Lower leg skin (tissue), 4 donors: ENCODE measurements at regions of chr5 and their contacts with region 1.

Region 1: GRCh38 chr5:69265931-69266330 is 31.2 kb downstream of the CDK7 start:
- DNase-seq: no peak
- H3K4me3 ChIP-seq: no peak overlapping the region
- CTCF ChIP-seq: no peak
- POLR2A ChIP-seq: no peak

Region 2: DNA sequence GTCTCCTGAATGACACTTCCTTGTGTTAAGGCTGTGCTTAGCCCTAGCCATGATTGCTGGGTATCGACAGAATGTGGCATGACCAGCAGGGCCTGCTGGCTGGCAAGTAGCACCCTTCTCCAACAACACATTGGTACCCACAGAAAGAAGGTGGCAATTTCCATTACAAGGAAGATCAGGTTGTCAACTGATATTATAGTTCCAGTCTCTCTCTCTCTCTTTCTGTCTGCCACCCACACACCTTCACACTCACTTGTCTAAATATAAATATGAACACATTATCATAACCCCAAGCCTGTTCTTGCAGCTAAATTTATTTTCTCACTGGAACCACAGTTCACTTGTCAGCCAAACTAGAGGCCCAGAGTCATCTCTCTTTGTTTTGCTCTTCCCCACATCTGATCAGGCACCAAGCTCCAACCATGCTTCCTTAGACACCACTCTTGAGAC is 1458.5 kb before region 1 on chr5:
- intact Hi-C with region 1: no loop called
- DNase-seq: no peak
- H3K4me3 ChIP-seq: no peak overlapping the region
- CTCF ChIP-seq: no peak
- POLR2A ChIP-seq: no peak

Region 3: GRCh38 chr5:69113851-69114250 is 152.1 kb before region 1 on chr5:
- intact Hi-C with region 1: loop called (anchors 10 kb)
- DNase-seq: no peak
- H3K4me3 ChIP-seq: no peak overlapping the region
- CTCF ChIP-seq: no peak
- POLR2A ChIP-seq: no peak

Region 4: DNA sequence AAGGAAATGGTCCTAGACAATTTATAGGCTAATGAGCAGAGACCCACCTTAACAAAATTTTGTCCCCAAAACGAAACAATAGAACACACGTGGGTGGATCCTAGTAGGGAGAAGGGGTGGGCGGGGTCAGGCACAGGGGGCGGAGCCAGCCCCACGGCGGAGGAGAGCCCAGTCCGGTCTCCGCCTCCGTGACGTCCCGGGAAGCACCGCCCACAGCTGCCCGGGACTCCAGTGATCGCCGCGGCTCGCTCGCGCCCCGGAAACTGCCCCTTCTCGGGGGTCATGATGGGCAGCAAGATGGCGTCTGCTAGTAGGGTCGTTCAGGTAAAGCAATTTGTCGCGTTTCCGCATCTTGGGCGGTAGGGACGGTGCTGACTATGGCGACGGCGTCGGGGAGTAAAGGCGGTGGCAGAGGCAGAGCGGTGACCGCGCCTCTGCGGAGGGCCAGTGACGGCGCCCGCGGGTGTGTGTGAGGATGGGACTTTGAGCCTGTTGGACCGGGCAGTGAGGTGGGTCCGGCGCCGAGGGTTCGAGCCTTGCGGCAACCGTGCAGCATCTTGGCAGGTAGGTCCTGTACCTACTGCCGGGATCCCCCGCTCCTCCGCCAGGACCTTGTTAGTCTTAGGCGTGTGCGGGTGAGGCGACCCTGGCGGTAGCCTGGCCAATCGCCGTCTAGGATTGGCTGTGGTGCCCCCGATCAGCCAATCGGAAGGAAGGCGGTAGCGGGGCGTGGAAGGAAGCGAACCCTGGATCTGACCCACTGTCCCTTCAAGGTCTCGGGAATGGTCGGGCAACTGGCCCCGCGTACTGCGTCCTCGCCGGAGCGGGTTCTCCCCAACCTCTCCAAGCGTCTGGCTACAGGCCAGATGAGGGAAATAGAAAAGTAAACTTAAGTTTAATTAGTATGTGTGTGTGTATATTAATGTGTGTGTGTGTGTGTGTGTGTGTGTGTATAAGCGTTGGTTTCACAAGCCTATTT is 48.1 kb before region 1 on chr5:
- intact Hi-C with region 1: no loop called
- DNase-seq: peak; percentile 98 to 99
- H3K4me3 ChIP-seq: peak overlapping the region; percentile 90
- CTCF ChIP-seq: no peak
- POLR2A ChIP-seq: no peak

Region 5: DNA sequence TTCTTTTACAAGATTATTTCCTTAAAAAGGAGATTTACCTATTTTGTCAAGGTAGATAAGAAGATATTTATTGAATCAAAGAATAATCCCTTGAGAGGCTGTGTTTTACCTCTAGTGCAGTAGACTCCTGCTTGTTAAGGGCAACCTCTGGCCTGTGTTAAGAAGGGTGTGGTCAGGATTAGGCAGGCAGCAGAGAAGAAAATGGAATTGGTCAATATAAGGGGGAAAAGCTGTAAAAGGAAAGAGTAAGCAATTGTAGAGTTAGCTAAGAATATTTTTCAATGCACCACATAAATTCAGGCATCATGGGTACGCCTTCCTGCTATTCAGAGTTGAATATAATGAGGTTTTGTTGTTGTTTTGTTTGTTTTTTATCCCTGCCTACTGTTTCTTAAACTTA is 60.4 kb after region 1 on chr5:
- intact Hi-C with region 1: loop called (anchors 10 kb)
- DNase-seq: no peak
- H3K4me3 ChIP-seq: no peak overlapping the region
- CTCF ChIP-seq: no peak
- POLR2A ChIP-seq: no peak